Mammary epithelial cell (primary cell): ENCODE measurements at regions of chr20 and their contacts with region 1.

Region 1: DNA sequence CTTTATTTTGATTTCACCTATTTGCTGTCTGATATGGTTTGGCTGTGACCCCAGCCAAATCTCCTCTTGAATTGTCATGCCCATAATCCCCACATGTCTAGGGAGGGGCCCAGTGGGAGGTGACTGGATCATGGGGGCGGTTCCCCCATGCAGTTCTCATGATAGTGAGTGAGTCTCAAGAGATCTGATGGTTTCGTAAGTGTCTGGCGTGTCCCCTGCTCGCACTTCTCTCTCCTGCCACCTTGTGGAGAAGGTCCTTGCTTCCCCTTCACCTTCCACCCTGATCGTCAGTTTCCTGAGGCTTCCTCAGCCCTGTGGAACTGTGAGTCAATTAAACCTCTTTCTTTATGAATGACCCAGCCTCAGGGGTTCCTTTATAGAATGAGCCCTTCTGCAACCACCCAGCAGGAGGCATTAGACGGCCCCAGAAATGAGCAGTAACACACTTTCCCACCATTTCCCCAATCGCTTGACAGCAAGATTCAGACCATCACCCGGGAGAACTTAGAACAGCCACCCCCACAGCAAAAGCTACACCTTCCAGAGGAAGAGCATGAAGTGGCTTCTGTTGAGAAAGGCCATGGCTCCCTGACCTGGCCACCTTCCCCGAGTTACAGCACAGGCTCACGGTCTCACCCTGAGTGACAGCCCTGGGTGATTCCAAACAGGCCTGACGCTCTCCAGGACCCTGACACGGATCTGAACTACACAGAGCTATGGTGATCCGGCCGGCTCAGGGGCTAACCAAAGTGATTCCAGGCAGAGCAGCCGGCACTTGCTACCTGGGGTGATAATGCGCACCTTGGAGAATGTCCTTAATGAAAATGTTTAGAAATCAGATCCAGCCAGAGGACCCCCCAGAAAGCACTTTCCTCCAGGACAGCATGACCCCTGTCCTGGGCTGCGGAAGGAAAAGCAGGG is 131.2 kb upstream of the CDH4 start:
- DNase-seq: peak; percentile 76
- H3K4me3 ChIP-seq: no peak overlapping the region
- H3K27ac ChIP-seq: no peak overlapping the region
- H3K4me1 ChIP-seq: no peaks in the 10 kb centered on the region
- H3K27me3 ChIP-seq: peaks cover under 1% of the 10 kb centered on the region
- CTCF ChIP-seq: peak; percentile 31 to 81

Region 2: GRCh38 chr20:60137629-60138245 is 983.1 kb before region 1 on chr20:
- CTCF ChIA-PET with region 1: no interaction called
- dilution Hi-C with region 1: no loop called
- in situ Hi-C with region 1: no loop called
- intact Hi-C with region 1: loop called (anchors 5 kb)
- DNase-seq: peak; percentile 28
- H3K4me3 ChIP-seq: no peak overlapping the region
- H3K27ac ChIP-seq: no peak overlapping the region
- H3K4me1 ChIP-seq: peaks cover under 1% of the 10 kb centered on the region
- H3K27me3 ChIP-seq: no peaks in the 10 kb centered on the region
- CTCF ChIP-seq: peak; percentile 61 to 64

Region 3: GRCh38 chr20:60752741-60753420 is 368.0 kb before region 1 on chr20:
- CTCF ChIA-PET with region 1: no interaction called
- dilution Hi-C with region 1: no loop called
- in situ Hi-C with region 1: no loop called
- intact Hi-C with region 1: no loop called
- DNase-seq: no peak
- H3K4me3 ChIP-seq: no peak overlapping the region
- H3K27ac ChIP-seq: no peak overlapping the region
- H3K4me1 ChIP-seq: peaks cover 5% of the 10 kb centered on the region
- H3K27me3 ChIP-seq: peaks cover 2% of the 10 kb centered on the region
- CTCF ChIP-seq: no peak

Region 4: GRCh38 chr20:60851826-60852704 is 268.8 kb before region 1 on chr20:
- CTCF ChIA-PET with region 1: no interaction called
- dilution Hi-C with region 1: no loop called
- in situ Hi-C with region 1: no loop called
- intact Hi-C with region 1: loop called (anchors 1 kb)
- DNase-seq: no peak
- H3K4me3 ChIP-seq: no peak overlapping the region
- H3K27ac ChIP-seq: no peak overlapping the region
- H3K4me1 ChIP-seq: no peaks in the 10 kb centered on the region
- H3K27me3 ChIP-seq: no peaks in the 10 kb centered on the region
- CTCF ChIP-seq: peak; percentile 69 to 84

Region 5: GRCh38 chr20:61082720-61083119 is 38.1 kb before region 1 on chr20:
- CTCF ChIA-PET with region 1: no interaction called
- dilution Hi-C with region 1: no loop called
- in situ Hi-C with region 1: no loop called
- intact Hi-C with region 1: no loop called
- DNase-seq: no peak
- H3K4me3 ChIP-seq: no peak overlapping the region
- H3K27ac ChIP-seq: no peak overlapping the region
- H3K4me1 ChIP-seq: no peaks in the 10 kb centered on the region
- H3K27me3 ChIP-seq: peaks cover 5% of the 10 kb centered on the region
- CTCF ChIP-seq: no peak

Region 6: DNA sequence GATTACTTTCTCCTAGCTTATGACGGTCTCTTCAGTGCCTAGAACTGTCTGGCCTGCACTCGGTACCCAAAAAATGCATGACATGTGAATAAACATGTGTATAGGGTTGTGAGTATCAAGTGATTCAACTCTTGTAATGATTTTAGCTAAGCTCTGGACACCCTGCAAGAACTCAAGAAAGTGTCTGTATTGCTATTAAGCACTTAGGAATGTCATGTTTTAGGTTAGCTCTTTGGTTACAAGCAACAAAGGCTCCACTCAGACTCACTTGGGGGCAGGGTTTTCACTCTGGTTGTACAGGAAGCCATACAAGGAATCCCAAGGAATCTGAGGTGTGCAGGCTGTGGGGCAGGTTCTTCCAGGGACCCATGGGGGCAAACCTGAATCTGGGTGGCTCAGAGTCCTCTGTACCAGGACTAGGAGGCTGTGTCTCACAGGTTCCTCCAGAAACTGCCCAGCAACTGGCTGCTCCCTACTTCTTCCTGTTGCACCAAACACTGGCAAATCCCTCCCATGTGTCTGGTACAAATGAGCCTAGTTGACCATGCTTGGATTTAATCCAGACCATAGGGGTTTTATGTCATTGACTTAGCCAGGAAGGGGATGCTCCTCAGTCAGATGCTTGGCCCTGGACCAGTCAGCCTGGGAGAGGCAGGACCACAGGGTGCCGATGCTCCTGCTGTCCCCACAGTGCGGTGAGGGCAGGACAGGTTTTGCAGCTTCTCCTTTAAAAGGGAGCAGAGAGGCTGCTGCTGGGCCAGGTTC is 53.3 kb after region 1 on chr20:
- CTCF ChIA-PET with region 1: no interaction called
- dilution Hi-C with region 1: no loop called
- in situ Hi-C with region 1: no loop called
- intact Hi-C with region 1: no loop called
- DNase-seq: peak; percentile 65
- H3K4me3 ChIP-seq: no peak overlapping the region
- H3K27ac ChIP-seq: no peak overlapping the region
- H3K4me1 ChIP-seq: peaks cover 11% of the 10 kb centered on the region
- H3K27me3 ChIP-seq: no peaks in the 10 kb centered on the region
- CTCF ChIP-seq: no peak

Region 7: GRCh38 chr20:61220160-61220559 is 99.3 kb after region 1 on chr20:
- CTCF ChIA-PET with region 1: no interaction called
- dilution Hi-C with region 1: no loop called
- in situ Hi-C with region 1: loop called in 1 of 2 experiments (anchors 10 kb)
- intact Hi-C with region 1: loop called (anchors 2 kb)
- DNase-seq: peak; percentile 2
- H3K4me3 ChIP-seq: no peak overlapping the region
- H3K27ac ChIP-seq: no peak overlapping the region
- H3K4me1 ChIP-seq: peaks cover 7% of the 10 kb centered on the region
- H3K27me3 ChIP-seq: peaks cover 3% of the 10 kb centered on the region
- CTCF ChIP-seq: no peak

Region 8: DNA sequence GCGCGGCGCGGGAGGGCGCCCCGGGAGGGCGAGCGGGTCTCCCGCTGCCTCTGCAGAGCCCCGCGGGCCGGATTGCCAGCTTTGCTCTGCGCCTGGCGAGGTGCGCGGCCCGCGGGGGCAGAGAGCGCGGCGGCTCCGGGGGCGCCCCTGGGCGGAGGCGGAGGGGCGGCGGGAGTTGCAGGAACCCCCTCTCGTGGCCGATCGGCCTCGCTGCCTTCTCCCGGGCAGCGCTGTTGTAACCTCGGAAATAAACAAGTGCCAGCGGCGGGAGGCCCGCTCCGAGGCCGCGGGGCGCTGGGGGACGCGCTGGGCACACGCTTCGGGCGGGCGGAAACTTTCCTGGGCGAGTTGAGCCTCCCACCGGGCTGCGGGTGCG is 132.4 kb after region 1 on chr20:
- CTCF ChIA-PET with region 1: no interaction called
- dilution Hi-C with region 1: no loop called
- in situ Hi-C with region 1: no loop called
- intact Hi-C with region 1: loop called (anchors 10 kb)
- DNase-seq: no peak
- H3K4me3 ChIP-seq: peak overlapping the region; percentile 57 to 84 (median 71)
- H3K27ac ChIP-seq: peak overlapping the region; percentile 30
- H3K4me1 ChIP-seq: peaks cover 29% of the 10 kb centered on the region
- H3K27me3 ChIP-seq: peaks cover 4% of the 10 kb centered on the region
- CTCF ChIP-seq: peak; percentile 8 to 52